ENCODE measurements at regions of chr9 and their contacts with region 1.

Region 1: GRCh38 chr9:71839665-71840064 is 71.3 kb downstream of the ABHD17B start:
- DNase-seq: no peak
- ATAC-seq: no peak
- H3K4me3 ChIP-seq: no peak overlapping the region
- H3K4me3 Mint-ChIP-seq: no peak overlapping the region
- H3K27ac ChIP-seq: no peak overlapping the region
- H3K27ac Mint-ChIP-seq: peak overlapping the region in 1 of 9 donors; percentile 11
- H3K4me1 ChIP-seq: no peaks in the 10 kb centered on the region
- H3K4me1 Mint-ChIP-seq: no peaks in the 10 kb centered on the region
- H3K27me3 ChIP-seq: no peaks in the 10 kb centered on the region
- H3K27me3 Mint-ChIP-seq: peaks cover 0 to 19% (median 0%) of the 10 kb centered on the region in 5 donors

Region 2: DNA sequence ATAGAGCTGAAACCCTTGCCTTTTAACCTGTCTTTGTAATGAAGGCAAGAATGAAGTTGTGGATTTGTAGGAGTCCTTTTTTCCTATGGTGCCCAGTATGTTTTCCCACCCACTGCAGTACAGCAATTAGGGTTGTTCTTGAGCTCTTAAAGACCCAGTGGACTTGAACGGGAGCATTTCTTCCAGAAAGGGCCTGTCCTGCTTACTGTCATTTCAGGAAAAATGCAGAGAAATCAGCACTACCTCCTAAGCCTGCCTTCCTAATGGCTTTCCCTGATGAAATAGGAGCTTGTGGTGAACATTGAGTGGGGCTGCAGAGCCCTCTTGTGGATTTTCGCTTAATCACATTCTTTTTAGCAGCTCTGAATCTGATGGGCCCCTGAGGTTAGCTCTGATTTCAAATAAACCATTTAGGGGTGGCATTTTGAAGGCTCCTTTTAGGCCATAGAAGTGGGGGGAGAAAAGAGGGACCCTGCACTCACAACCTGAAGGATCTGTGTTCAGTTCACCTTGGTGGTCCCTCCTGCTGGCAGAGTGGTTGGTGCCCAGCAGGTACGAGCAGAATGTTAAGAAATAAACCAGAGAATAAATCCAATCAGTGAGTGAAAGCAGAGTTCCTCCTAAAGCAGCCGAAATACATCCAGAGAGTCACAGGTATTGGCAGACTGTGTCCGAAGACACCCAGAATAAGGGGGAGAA is 1237.2 kb before region 1 on chr9:
- CTCF ChIA-PET with region 1: no interaction called
- POLR2A ChIA-PET with region 1: no interaction called
- intact Hi-C with region 1: no loop called
- DNase-seq: peak in 7 of 9 donors; percentile 27 to 68 (median 52)
- ATAC-seq: peak; percentile 84
- H3K4me3 ChIP-seq: no peak overlapping the region
- H3K4me3 Mint-ChIP-seq: no peak overlapping the region
- H3K27ac ChIP-seq: no peak overlapping the region
- H3K27ac Mint-ChIP-seq: peak overlapping the region in 3 of 9 donors; percentile 32 to 79 (median 55)
- H3K4me1 ChIP-seq: no peaks in the 10 kb centered on the region
- H3K4me1 Mint-ChIP-seq: peaks cover 0 to 19% (median 5%) of the 10 kb centered on the region in 7 donors
- H3K27me3 ChIP-seq: no peaks in the 10 kb centered on the region
- H3K27me3 Mint-ChIP-seq: no peaks in the 10 kb centered on the region

Region 3: DNA sequence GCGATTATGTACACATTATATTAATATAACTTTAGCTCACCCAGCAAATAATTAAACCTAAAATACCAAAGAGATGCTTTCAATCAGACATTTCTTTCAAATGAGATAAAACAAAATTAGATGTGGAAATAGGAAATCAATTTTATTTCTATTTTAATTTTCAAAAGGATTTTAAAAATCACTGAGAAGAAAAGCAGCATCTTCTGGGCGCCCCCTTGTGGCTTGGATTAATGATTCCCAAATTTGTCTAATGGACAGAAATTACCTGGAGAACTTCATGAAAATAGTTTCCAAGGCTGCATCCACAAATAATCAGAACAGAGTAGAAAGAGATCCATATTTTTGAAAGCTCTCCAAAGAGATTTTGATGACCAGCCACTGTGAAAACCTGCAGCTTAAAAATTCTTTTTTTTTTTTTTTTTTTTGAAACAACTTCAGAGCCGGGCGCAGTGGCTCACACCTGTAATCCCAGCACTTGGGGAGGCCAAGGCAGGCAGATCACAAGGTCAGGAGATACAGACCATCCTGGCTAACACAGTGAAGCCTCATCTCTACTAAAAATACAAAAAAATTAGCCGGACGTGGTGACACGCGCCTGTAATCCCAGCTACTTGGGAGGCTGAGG is 20.4 kb before region 1 on chr9:
- CTCF ChIA-PET with region 1: no interaction called
- POLR2A ChIA-PET with region 1: no interaction called
- intact Hi-C with region 1: no loop called
- DNase-seq: peak in 7 of 9 donors; percentile 26 to 61 (median 55)
- ATAC-seq: no peak
- H3K4me3 ChIP-seq: no peak overlapping the region
- H3K4me3 Mint-ChIP-seq: no peak overlapping the region
- H3K27ac ChIP-seq: no peak overlapping the region
- H3K27ac Mint-ChIP-seq: peak overlapping the region in 3 of 9 donors; percentile 12 to 60 (median 51)
- H3K4me1 ChIP-seq: peaks cover 7 to 8% of the 10 kb centered on the region in 2 donors
- H3K4me1 Mint-ChIP-seq: peaks cover 11 to 35% (median 26%) of the 10 kb centered on the region in 7 donors
- H3K27me3 ChIP-seq: no peaks in the 10 kb centered on the region
- H3K27me3 Mint-ChIP-seq: no peaks in the 10 kb centered on the region

Region 4: DNA sequence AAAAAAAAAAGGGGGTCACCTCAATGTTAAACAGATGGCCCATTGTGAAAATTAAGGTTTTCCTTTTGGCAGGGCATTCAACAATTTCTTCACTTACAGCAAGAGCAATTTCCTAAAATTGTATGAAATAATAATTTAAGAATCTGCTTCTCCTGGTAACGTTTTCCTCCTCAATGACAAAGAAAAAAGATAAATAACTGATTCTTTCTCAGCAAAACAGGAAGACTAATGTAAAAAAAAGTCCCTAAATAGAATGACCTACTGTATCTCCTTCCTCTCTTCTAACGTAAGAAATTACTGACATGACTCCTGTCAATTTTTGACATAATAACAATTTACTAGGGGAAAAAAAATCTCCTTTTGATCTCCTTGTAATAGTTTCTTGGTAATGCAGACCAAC is 45.8 kb after region 1 on chr9:
- CTCF ChIA-PET with region 1: no interaction called
- POLR2A ChIA-PET with region 1: no interaction called
- intact Hi-C with region 1: loop called in 1 of 2 experiments (anchors 5 kb)
- DNase-seq: no peak
- ATAC-seq: no peak
- H3K4me3 ChIP-seq: no peak overlapping the region
- H3K4me3 Mint-ChIP-seq: peak overlapping the region in 2 of 10 donors; percentile 14 to 24
- H3K27ac ChIP-seq: no peak overlapping the region
- H3K27ac Mint-ChIP-seq: peak overlapping the region in 6 of 9 donors; percentile 29 to 67 (median 44)
- H3K4me1 ChIP-seq: peaks cover 0 to 16% of the 10 kb centered on the region in 2 donors
- H3K4me1 Mint-ChIP-seq: peaks cover 28 to 58% (median 47%) of the 10 kb centered on the region in 7 donors
- H3K27me3 ChIP-seq: no peaks in the 10 kb centered on the region
- H3K27me3 Mint-ChIP-seq: no peaks in the 10 kb centered on the region